Panc1 (cell line): ENCODE measurements at regions of chr3 and their contacts with region 1.

Region 1: DNA sequence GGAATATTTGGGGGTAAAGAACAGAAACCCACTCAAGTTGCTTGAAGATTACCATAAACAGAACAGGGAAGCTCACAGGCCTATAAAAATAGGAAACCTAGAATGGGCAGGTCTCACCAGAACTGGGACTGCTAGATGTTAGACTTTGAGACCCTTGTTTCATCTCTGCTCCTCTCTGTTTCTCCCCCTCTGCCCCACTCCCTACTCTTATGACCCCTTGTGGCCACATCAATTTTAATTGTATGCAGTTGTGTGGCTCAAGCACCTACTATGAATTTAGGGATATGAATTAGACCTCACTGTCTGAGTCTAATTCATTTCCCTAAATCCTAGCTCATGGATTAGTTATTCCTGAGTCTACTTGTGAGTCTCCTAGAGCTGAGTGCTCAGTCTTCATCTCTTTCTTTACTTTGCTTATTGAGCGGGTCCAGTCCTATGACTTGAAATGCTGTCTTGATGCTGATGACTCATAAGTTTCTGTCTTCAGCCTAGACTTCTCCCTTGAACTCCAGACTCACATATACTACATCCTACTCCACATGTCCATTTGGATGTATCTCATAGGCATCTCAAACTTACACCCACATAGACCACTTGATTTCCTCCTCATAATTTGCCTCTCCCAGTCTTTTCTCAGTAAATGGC is 78.7 kb downstream of the ITPR1 start:
- DNase-seq: no peak
- ATAC-seq: no peak
- H3K4me3 ChIP-seq: no peak overlapping the region
- H3K27ac ChIP-seq: no peak overlapping the region
- H3K4me1 ChIP-seq: no peaks in the 10 kb centered on the region
- H3K27me3 ChIP-seq: no peaks in the 10 kb centered on the region
- CTCF ChIP-seq: peak; percentile 20

Region 2: GRCh38 chr3:4493014-4493940 is 78.5 kb before region 1 on chr3 and contains the start of gene ITPR1:
- CTCF ChIA-PET with region 1: no interaction called
- POLR2A ChIA-PET with region 1: interaction called, 13 read pairs
- in situ Hi-C with region 1: no loop called
- intact Hi-C with region 1: no loop called
- DNase-seq: peak; percentile 84
- ATAC-seq: peak; percentile 98
- H3K4me3 ChIP-seq: peak within 1 kb of the TSS; percentile 79 to 90
- H3K27ac ChIP-seq: peak within 1 kb of the TSS; percentile 51
- H3K4me1 ChIP-seq: peaks cover 3% of the 10 kb centered on the region; the same call in 1 of the 2 replicates
- H3K27me3 ChIP-seq: peaks cover 2% of the 10 kb centered on the region; the same call in 1 of the 2 replicates
- CTCF ChIP-seq: no peak
- total RNA-seq, gene ITPR1: 8.7 TPM

Region 3: DNA sequence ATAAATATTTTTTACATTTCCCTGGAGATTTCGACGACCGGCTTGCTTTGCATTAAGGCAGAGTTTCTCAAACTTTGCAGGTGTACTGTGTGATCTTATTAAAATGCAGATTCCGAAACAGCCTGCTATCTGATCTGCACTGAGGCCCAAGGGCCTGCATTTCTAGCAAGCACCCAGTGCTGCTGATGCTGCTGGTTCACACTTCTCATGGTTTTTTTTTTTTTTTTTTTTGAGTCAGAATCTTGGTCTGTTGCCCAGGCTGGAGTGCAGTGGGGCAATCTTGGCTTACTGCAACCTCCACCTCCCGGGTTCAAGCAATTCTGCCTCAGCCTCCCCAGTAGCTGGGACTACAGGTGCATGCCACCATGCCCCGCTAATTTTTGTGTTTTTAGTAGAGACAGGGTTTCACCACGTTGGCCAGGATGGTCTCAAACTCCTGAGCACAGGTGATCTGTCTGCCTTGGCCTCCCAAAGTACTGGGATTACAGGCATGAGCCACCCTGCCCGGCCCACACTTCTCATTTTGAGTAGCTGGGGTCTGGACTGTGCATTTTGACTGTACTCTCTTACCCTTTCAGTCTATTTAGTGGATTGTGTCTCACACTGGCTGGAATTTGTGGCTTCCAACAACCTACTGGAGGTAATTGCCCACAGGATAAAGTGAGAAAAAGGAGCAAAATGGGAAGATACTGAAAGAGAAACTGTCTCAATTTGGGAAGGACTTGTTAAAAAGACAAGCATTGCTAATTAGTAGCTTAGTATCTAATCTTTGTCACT is 15.4 kb after region 1 on chr3:
- CTCF ChIA-PET with region 1: no interaction called
- POLR2A ChIA-PET with region 1: interaction called, 10 read pairs
- in situ Hi-C with region 1: no loop called
- intact Hi-C with region 1: no loop called
- DNase-seq: no peak
- ATAC-seq: no peak
- H3K4me3 ChIP-seq: no peak overlapping the region
- H3K27ac ChIP-seq: no peak overlapping the region
- H3K4me1 ChIP-seq: no peaks in the 10 kb centered on the region; the same call in 1 of the 2 replicates
- H3K27me3 ChIP-seq: no peaks in the 10 kb centered on the region
- CTCF ChIP-seq: no peak